PC-9 (cell line): ENCODE measurements at regions of chr12 and their contacts with region 1.

Region 1: GRCh38 chr12:6533923-6534694 is at the start of gene GAPDH:
- DNase-seq: peak; percentile 96 to 98
- H3K4me3 ChIP-seq: peak within 1 kb of the TSS; percentile 97
- H3K27ac ChIP-seq: peak within 1 kb of the TSS; percentile 83
- H3K4me1 ChIP-seq: peaks cover 56% of the 10 kb centered on the region
- H3K27me3 ChIP-seq: no peaks in the 10 kb centered on the region
- CTCF ChIP-seq: no peak
- total RNA-seq, gene GAPDH: 6,143 and 8,169 TPM in 2 replicates

Region 2: DNA sequence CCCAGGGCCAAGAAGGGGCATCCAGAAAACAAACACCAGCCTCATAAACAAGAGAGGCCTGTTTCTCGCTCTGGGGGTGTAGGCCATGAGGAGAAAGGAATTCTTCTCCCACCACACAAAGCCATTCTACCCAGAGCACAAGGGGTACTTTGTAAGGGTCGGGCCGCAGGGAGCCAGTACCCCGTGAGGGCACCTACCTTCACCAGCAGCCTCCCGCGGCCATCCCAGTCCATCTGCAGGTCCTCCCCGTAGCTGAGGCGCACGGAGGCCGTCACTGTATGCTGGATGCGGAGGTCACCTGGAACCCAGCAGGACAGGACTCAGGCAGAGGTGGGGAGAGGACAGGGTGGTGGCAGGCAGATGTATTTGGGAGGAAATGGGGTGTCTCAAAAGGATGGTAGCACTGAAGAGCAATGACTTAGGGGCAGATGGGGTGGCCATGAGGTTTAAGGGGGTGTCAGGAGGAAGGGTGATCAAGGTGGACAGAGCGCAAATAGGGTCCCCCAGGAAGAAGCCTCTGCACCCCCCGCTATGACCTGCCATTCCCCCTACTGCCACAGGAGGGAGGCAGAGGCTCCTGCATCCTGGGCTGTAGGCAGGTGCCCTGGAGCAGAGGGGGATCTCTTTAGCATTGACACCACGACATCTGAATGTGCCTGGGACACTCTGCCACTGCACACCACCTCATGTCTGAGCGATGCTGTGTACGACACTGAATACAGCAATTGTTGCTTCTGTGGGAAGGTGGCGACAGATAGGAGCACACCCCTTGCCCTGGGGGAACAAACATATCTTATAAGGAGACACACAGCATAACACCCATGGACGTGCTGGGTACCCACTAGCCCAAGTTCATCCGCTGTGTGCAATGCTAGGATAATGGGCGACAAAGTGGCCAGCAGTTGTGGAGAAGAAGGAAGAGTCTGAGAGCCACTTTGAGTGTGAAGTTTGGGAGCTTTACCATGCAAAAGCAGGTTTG is 471.1 kb before region 1 on chr12:
- CTCF ChIA-PET with region 1: no interaction called
- POLR2A ChIA-PET with region 1: interaction called, 7 read pairs
- intact Hi-C with region 1: loop called (anchors 10 kb)
- DNase-seq: peak; percentile 48 to 80
- H3K4me3 ChIP-seq: no peak overlapping the region
- H3K27ac ChIP-seq: no peak overlapping the region
- H3K4me1 ChIP-seq: peaks cover 34% of the 10 kb centered on the region
- H3K27me3 ChIP-seq: no peaks in the 10 kb centered on the region
- CTCF ChIP-seq: peak; percentile 98

Region 3: GRCh38 chr12:6306615-6307220 is 227.4 kb before region 1 on chr12:
- CTCF ChIA-PET with region 1: no interaction called
- POLR2A ChIA-PET with region 1: interaction called, 51 read pairs
- intact Hi-C with region 1: no loop called
- DNase-seq: peak; percentile 52 to 69
- H3K4me3 ChIP-seq: no peak overlapping the region
- H3K27ac ChIP-seq: no peak overlapping the region
- H3K4me1 ChIP-seq: peaks cover 34% of the 10 kb centered on the region
- H3K27me3 ChIP-seq: no peaks in the 10 kb centered on the region
- CTCF ChIP-seq: no peak

Region 4: GRCh38 chr12:6376079-6376869 is 157.8 kb before region 1 on chr12:
- CTCF ChIA-PET with region 1: interaction called, 19 read pairs
- POLR2A ChIA-PET with region 1: interaction called, 9 read pairs
- intact Hi-C with region 1: loop called (anchors 1 kb)
- DNase-seq: peak; percentile 87 to 97
- H3K4me3 ChIP-seq: peak overlapping the region; percentile 62
- H3K27ac ChIP-seq: peak overlapping the region; percentile 89
- H3K4me1 ChIP-seq: peaks cover 41% of the 10 kb centered on the region
- H3K27me3 ChIP-seq: no peaks in the 10 kb centered on the region
- CTCF ChIP-seq: peak; percentile 53; the same call in 1 of the 2 replicates

Region 5: GRCh38 chr12:6493497-6494257 is 40.4 kb before region 1 on chr12 and contains the start of gene NCAPD2:
- CTCF ChIA-PET with region 1: no interaction called
- POLR2A ChIA-PET with region 1: interaction called, 23 read pairs
- intact Hi-C with region 1: loop called (anchors 1 kb)
- DNase-seq: peak; percentile 93 to 98
- H3K4me3 ChIP-seq: peak within 1 kb of the TSS; percentile 87
- H3K27ac ChIP-seq: peak within 1 kb of the TSS; percentile 85
- H3K4me1 ChIP-seq: peaks cover 24% of the 10 kb centered on the region
- H3K27me3 ChIP-seq: no peaks in the 10 kb centered on the region
- CTCF ChIP-seq: peak; percentile 46; the same call in 1 of the 2 replicates
- total RNA-seq, gene NCAPD2: 220 and 266 TPM in 2 replicates

Region 6: GRCh38 chr12:6607751-6608591 is 73.9 kb after region 1 on chr12:
- CTCF ChIA-PET with region 1: interaction called, 3 read pairs
- POLR2A ChIA-PET with region 1: interaction called, 8 read pairs
- intact Hi-C with region 1: loop called (anchors 1 kb)
- DNase-seq: peak; percentile 75 to 83
- H3K4me3 ChIP-seq: no peak overlapping the region
- H3K27ac ChIP-seq: 0 out of 2 replicates have a peak overlapping the region, but pooled peaks have one; percentile 4
- H3K4me1 ChIP-seq: peaks cover 49% of the 10 kb centered on the region
- H3K27me3 ChIP-seq: no peaks in the 10 kb centered on the region
- CTCF ChIP-seq: no peak

Region 7: DNA sequence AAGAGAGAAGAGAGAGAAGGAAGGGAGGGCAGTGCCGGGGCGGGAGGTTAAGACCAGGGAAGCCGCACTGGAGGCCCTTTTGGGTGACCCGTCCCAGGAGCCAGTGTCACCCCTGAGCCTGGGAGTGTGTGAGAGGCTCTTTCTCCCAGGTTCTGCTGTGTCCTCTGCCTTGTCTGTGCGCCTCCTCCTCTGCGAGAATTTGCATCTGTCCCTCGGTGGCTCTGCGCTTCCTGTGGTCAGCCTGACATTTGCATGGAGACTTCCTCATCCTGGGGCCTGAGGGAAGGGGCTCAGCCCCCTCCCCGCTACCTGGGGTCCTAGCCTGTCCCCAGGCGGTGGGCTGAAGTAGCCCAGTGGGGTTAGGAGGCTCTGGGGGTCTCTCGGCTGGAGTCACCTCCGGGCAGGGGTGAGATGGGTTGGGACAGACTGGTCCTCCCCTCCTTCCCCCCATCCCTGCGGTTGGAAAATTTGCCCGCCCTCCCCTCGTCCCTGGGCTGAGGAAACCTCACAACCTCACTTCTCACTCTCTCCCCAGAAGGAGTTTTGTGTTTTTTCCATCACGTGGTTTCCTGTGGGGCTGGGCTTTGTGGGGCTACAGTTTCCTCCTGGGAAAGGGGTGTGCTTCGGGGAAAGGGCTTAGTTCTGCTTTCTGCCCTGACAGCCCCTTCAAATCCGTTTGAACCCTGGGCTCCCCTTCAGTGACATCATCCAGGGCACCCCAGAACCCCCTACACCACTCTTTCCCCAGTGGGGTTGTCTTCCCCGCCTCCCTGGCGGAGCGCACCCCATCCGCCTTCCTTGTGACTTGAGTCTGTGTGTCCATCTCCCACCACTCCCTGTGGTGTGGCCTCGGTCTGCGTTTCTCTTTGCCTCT is 419.6 kb after region 1 on chr12:
- CTCF ChIA-PET with region 1: no interaction called
- POLR2A ChIA-PET with region 1: no interaction called
- intact Hi-C with region 1: no loop called
- DNase-seq: no peak
- H3K4me3 ChIP-seq: no peak overlapping the region
- H3K27ac ChIP-seq: no peak overlapping the region
- H3K4me1 ChIP-seq: no peaks in the 10 kb centered on the region
- H3K27me3 ChIP-seq: no peaks in the 10 kb centered on the region
- CTCF ChIP-seq: no peak

Region 8: DNA sequence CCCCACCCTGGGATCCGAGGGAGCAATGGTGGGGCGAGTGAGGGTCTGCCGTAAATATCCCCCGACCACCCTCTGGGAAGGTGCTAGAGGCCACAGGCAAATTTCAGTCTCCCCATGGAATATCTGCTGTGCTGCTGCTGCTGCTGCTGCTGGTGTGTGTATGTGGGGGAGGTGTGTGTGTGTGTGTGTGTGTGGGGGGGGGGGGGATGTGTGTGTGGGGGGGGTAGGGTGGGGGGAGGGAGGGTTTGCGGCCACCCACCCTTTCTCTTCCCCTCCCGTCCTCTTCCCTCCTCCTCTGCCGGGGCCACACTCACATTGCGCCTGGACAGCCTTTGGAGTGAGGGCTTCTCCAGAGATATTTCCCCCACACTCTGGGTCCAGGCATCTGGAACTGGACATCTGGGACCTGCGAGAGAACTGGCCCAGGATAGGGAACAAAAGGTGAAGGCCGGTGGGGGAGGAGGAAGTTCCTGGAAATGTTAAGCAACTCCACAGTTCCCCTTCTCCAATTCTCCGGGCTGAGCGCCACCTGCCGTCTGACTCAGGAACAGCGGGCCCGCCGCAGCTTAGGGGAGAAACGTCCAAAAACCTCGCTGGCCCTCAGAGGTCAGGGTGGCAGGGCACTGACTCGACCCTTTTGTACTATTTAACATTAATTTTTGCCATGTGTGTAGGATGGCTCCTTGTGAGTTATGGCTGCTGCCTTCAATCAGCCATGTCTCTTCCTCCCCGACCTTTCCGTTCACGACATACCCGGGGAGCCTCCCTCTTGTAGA is 574.9 kb after region 1 on chr12 and contains the start of gene C1RL:
- CTCF ChIA-PET with region 1: no interaction called
- POLR2A ChIA-PET with region 1: interaction called, 25 read pairs
- intact Hi-C with region 1: no loop called
- DNase-seq: peak; percentile 72 to 91
- H3K4me3 ChIP-seq: peak within 1 kb of the TSS; percentile 79
- H3K27ac ChIP-seq: peak within 1 kb of the TSS; percentile 76
- H3K4me1 ChIP-seq: peaks cover 28% of the 10 kb centered on the region
- H3K27me3 ChIP-seq: no peaks in the 10 kb centered on the region
- CTCF ChIP-seq: peak; percentile 97
- total RNA-seq, gene C1RL: 70.4 and 72.9 TPM in 2 replicates

Region 9: DNA sequence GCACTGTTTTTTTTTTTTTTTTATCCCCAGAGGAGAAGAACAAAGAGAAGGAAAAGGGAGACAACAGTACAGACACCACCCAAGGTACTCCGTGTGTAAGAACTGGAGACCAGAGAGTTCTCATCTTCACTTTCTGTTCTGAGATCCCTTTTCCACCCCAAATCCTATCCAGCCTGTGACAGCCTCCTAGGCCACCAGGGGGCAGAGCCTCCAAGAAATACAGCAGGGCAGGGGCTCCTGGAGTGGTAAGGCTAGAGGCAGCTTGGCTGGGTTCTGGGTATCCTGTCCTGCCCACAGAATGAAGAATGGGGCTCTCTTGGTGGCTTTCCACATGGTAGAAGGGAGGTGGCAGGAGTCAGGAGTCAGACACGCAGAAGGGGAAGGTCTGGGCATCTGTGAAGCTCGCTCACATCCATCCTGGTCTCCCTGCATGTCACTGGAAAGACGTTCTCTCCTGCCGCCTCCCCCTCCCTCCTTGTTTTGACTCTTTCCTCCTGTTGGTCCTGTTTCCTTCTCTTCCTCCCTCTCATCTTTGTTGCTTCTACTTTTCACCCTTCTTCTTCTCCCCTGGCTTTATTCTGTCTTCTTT is 608.0 kb after region 1 on chr12:
- CTCF ChIA-PET with region 1: no interaction called
- POLR2A ChIA-PET with region 1: no interaction called
- intact Hi-C with region 1: no loop called
- DNase-seq: peak; percentile 52 to 61
- H3K4me3 ChIP-seq: no peak overlapping the region
- H3K27ac ChIP-seq: no peak overlapping the region
- H3K4me1 ChIP-seq: no peaks in the 10 kb centered on the region
- H3K27me3 ChIP-seq: no peaks in the 10 kb centered on the region
- CTCF ChIP-seq: peak; percentile 91